HAP-1 (cell line): ENCODE measurements at regions of chrX and their contacts with region 1.

Region 1: GRCh38 chrX:73855546-73855945 is 292.5 kb downstream of the CHIC1 start:
- DNase-seq: peak; percentile 73 to 81
- H3K4me3 ChIP-seq: no peak overlapping the region
- H3K4me1 ChIP-seq: 0 out of 2 replicates have a peak, but pooled peaks cover 3% of the 10 kb centered on the region
- H3K27me3 ChIP-seq: no peaks in the 10 kb centered on the region

Region 2: DNA sequence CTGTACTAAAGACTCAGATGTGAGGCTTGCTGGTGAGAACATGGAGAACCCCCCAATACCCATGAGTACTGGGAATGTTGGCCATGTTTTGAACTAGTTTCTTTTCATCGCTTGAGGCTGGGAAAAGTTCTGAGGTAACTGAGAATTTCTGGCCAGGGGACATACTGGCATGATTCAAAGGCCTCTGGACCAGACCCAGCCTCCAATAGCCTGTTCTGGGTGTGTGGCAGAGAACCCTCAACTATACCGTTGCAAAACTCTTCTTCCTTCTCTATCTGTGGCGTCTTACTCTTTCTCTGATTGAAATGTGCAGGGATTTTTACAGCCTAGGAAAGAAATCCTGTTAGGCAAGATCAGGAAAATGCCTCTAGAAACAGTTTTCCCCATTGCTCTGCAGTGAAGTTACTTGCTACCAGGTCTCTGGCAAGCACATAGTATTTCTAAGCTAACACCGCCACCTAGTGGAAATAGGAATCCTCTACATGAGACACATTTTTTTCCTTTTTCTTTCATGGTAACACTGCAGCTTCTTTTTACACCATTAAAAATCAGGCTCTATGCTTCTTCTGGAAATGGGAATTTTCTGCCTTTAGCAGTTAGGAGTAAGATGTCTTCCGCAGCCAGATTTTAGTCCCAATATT is 277.7 kb after region 1 on chrX:
- in situ Hi-C with region 1: loop called (anchors 5 kb)
- DNase-seq: peak; percentile 48 to 80
- H3K4me3 ChIP-seq: no peak overlapping the region
- H3K4me1 ChIP-seq: peaks cover 7% of the 10 kb centered on the region
- H3K27me3 ChIP-seq: no peaks in the 10 kb centered on the region

Region 3: DNA sequence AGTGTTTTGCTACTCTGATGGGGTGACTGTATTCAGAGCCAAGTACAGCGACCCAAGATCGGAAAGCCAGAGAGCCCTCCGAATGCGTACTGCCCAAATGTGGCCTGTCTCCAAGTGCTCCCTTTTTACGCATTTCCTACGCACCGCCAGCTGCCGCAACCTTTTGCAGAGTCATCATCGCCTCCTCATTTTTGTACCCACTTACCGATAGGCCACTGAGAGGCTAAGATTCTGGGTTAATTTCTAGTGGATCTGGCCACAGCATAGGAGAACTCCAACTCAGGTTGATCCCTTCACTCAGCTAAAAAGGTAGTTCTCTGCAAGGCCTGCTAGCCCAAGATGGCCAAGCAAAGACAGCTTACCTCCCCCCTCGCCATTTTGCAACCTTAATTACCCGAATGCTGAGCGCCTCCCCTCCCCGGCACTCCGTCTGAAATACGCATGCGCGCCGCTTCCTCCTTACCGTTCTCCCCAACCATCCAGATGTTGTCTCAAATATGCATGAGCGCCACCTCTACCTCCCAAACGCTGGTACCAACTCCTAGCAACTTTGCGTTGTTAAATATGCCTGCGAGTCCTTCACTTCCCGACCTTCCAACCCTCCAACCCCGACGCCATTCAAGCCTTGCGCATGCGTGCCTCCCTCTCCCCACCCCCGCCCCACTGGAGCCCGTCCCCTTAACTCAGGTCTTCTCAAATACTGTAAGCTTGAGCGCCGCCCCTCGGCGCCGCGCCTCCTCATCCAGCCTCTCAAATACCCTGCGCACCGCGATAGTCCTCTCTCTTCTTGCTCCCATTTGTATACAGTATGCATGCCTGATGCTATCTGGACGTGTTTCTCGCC is 436.6 kb after region 1 on chrX:
- in situ Hi-C with region 1: no loop called
- DNase-seq: peak; percentile 92 to 95
- H3K4me3 ChIP-seq: peak overlapping the region; percentile 69
- H3K4me1 ChIP-seq: peaks cover 13% of the 10 kb centered on the region
- H3K27me3 ChIP-seq: no peaks in the 10 kb centered on the region

Region 4: GRCh38 chrX:74343343-74344279 is 488.1 kb after region 1 on chrX:
- in situ Hi-C with region 1: loop called (anchors 25 kb)
- DNase-seq: peak; percentile 80 to 82
- H3K4me3 ChIP-seq: no peak overlapping the region
- H3K4me1 ChIP-seq: no peaks in the 10 kb centered on the region; the same call in 1 of the 2 replicates
- H3K27me3 ChIP-seq: no peaks in the 10 kb centered on the region

Region 5: DNA sequence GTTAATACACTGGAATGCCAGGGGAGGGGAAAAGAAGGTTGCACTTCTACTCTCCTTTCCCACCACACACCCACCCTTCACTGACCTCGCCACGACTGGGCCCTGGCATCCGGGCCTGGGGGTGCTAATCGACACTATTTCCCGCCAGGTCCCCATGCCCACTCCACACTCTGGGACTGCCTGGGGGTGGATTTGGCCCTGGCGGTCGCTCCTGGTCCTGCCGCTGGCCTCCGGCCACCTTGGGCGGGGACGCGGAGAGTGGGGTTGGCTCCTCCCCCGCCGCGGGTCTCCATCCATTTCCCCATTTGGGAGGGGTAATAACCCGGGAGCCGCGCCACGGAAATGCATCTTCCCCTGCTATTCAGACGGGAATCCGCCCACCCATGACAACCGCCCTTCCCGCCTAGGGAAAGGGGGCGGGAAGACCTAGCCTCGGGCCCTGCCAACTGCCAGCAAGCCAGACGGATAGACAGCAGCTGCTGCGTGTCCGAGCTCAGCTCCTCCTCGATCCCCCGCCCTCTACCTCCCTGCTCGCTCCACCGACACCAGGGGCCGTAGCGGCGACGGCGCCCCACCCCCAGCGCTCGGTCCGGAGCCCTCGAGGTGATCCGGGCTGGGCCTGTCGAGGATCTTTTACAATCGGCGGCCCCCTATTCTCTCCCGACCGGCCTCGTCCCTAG is 680.7 kb after region 1 on chrX:
- in situ Hi-C with region 1: loop called (anchors 25 kb)
- DNase-seq: no peak
- H3K4me3 ChIP-seq: no peak overlapping the region
- H3K4me1 ChIP-seq: peaks cover 15% of the 10 kb centered on the region
- H3K27me3 ChIP-seq: no peaks in the 10 kb centered on the region

Region 6: GRCh38 chrX:75045369-75045768 is 1189.8 kb after region 1 on chrX:
- in situ Hi-C with region 1: no loop called
- DNase-seq: no peak
- H3K4me3 ChIP-seq: no peak overlapping the region
- H3K4me1 ChIP-seq: no peaks in the 10 kb centered on the region
- H3K27me3 ChIP-seq: no peaks in the 10 kb centered on the region